ENCODE measurements at regions of chr20 and their contacts with region 1.

Region 1: GRCh38 chr20:4418141-4418540 is 303.6 kb upstream of the PRND start:
- DNase-seq: no peak
- ATAC-seq: no peak
- H3K4me3 ChIP-seq: no peak overlapping the region
- H3K27ac ChIP-seq: no peak overlapping the region
- H3K4me1 ChIP-seq: no peaks in the 10 kb centered on the region
- H3K27me3 ChIP-seq: no peaks in the 10 kb centered on the region
- CTCF ChIP-seq: no peak

Region 2: DNA sequence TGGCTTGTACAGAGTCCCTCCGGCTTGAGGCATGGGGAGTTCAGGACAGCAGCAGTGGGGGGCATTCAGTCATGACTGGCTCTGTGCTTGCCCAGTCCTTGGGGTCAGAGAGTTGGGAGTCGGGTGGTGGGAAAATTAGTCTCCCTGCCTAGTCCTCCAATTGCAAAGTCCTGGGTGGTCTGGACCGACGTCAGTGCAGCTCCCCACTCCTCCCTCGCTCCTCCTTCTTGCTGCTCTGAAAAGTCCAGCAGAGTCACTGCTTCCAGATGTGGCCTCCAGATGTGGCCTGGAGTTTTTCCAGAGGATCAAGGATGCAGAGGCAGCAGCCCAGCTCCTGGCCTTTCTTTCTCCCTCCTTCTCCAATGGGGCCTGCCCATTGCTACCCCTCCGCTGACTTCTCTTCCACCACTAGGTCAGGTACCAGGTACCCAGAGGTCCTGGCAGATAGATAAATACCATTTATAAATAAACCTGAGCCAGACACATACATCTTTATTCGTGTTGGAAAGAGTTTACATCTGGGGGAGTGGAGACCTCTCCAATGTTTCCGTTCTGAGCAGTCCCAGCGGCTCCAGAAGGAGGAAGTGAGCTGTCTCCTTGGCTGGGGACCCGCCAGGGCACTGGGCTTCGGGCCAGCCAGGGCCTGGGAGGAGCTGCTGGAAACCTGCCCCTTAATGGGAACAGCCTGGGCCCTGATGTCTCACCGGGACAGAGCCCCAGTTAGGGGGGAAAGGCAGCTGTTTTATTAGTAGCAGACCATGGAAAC is 353.8 kb before region 1 on chr20:
- intact Hi-C with region 1: no loop called
- DNase-seq: peak; percentile 91 to 94
- ATAC-seq: peak; percentile 80 to 93 (median 84)
- H3K4me3 ChIP-seq: no peak overlapping the region
- H3K27ac ChIP-seq: peak overlapping the region; percentile 67
- H3K4me1 ChIP-seq: peaks cover 11% of the 10 kb centered on the region
- H3K27me3 ChIP-seq: no peaks in the 10 kb centered on the region
- CTCF ChIP-seq: no peak

Region 3: DNA sequence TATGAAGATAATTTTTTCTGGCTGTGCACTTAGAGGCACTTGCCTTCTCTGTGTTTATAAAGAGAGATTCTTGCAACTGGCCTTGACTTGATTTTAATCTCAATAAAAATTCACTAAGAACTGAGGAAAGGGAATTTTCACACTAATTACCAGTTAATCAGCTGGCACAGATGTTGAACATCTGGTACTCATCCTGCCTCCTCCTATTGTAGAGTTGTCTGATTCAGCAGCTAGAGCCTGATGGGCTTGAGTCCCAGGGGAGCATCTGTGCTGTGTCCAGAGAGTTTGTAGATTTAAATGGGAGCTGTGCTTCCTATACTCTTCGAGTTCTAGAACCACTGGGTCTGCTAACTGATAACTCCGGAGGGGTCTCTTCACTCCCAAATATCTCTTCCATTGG is 118.4 kb before region 1 on chr20:
- intact Hi-C with region 1: loop called in 1 of 2 experiments (anchors 1 kb)
- DNase-seq: no peak
- ATAC-seq: no peak
- H3K4me3 ChIP-seq: no peak overlapping the region
- H3K27ac ChIP-seq: no peak overlapping the region
- H3K4me1 ChIP-seq: peaks cover 2% of the 10 kb centered on the region
- H3K27me3 ChIP-seq: peaks cover 0 to 2% (median 0%) of the 10 kb centered on the region in 3 donors
- CTCF ChIP-seq: no peak

Measured in psoas muscle (tissue), 8 donors.